OCI-LY7 (cell line): ENCODE measurements at regions of chr12 and their contacts with region 1.

Region 1: GRCh38 chr12:7933255-7933729 is 2.7 kb downstream of the SLC2A3 start:
- DNase-seq: peak; percentile 92
- H3K4me3 ChIP-seq: peak overlapping the region; percentile 72
- H3K27ac ChIP-seq: peak overlapping the region; percentile 54
- H3K4me1 ChIP-seq: peaks cover 27% of the 10 kb centered on the region
- CTCF ChIP-seq: peak; percentile 93

Region 2: GRCh38 chr12:7859552-7859951 is 73.7 kb before region 1 on chr12:
- CTCF ChIA-PET with region 1: interaction called, 5 read pairs
- POLR2A ChIA-PET with region 1: no interaction called
- intact Hi-C with region 1: loop called (anchors 1 kb)
- DNase-seq: no peak
- H3K4me3 ChIP-seq: no peak overlapping the region
- H3K27ac ChIP-seq: no peak overlapping the region
- H3K4me1 ChIP-seq: no peaks in the 10 kb centered on the region
- CTCF ChIP-seq: no peak

Region 3: DNA sequence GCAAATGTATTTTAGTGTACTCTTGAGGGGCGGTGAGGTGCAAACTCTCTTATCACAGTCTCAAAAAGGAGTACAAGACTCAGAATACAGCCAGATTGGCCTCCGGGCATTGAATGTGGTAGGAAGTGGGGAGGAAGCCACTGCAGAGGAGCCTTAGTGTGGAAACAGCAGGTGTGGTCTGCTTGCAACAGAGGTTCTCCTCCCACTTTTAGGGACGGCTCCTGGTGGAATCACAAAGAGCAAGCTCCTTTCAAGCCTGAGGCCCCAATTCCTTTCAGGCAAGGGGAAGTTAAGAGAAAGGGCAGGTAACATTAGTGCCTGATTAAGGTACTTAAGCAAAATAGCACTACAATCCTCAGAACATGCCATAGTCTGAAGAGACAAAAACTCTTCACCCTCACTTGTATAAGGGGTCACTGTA is 26.4 kb after region 1 on chr12:
- CTCF ChIA-PET with region 1: interaction called, 17 read pairs
- POLR2A ChIA-PET with region 1: interaction called, 109 read pairs
- intact Hi-C with region 1: loop called (anchors 1 kb)
- DNase-seq: peak; percentile 57
- H3K4me3 ChIP-seq: peak overlapping the region; percentile 71
- H3K27ac ChIP-seq: peak overlapping the region; percentile 26
- H3K4me1 ChIP-seq: peaks cover 31% of the 10 kb centered on the region
- CTCF ChIP-seq: no peak

Region 4: GRCh38 chr12:7981446-7981845 is 48.2 kb after region 1 on chr12:
- CTCF ChIA-PET with region 1: interaction called, 3 read pairs
- POLR2A ChIA-PET with region 1: interaction called, 5 read pairs
- intact Hi-C with region 1: loop called (anchors 1 kb)
- DNase-seq: no peak
- H3K4me3 ChIP-seq: no peak overlapping the region
- H3K27ac ChIP-seq: no peak overlapping the region
- H3K4me1 ChIP-seq: peaks cover 16% of the 10 kb centered on the region
- CTCF ChIP-seq: no peak

Region 5: GRCh38 chr12:7995266-7995963 is 62.1 kb after region 1 on chr12:
- CTCF ChIA-PET with region 1: interaction called, 6 read pairs
- POLR2A ChIA-PET with region 1: interaction called, 8 read pairs
- intact Hi-C with region 1: loop called (anchors 1 kb)
- DNase-seq: peak; percentile 88
- H3K4me3 ChIP-seq: no peak overlapping the region
- H3K27ac ChIP-seq: no peak overlapping the region
- H3K4me1 ChIP-seq: peaks cover 14% of the 10 kb centered on the region
- CTCF ChIP-seq: peak; percentile 93